IMR-90 (cell line): ENCODE measurements at regions of chr17 and their contacts with region 1.

Region 1: GRCh38 chr17:15257258-15257788 is 7.8 kb downstream of the PMP22 start:
- DNase-seq: peak; percentile 72
- ATAC-seq: peak; percentile 37
- H3K4me3 ChIP-seq: no peak overlapping the region
- H3K27ac ChIP-seq: no peak overlapping the region
- H3K4me1 ChIP-seq: peaks cover 13% of the 10 kb centered on the region
- H3K27me3 ChIP-seq: no peaks in the 10 kb centered on the region
- CTCF ChIP-seq: peak; percentile 84
- POLR2A ChIP-seq: no peak
- RAD21 ChIP-seq: peak; percentile 71

Region 2: GRCh38 chr17:15273141-15273793 is 15.9 kb after region 1 on chr17:
- CTCF ChIA-PET with region 1: no interaction called
- POLR2A ChIA-PET with region 1: no interaction called
- dilution Hi-C with region 1: no loop called
- in situ Hi-C with region 1: no loop called
- intact Hi-C with region 1: no loop called
- DNase-seq: peak; percentile 98
- ATAC-seq: peak; percentile 90
- H3K4me3 ChIP-seq: no peak overlapping the region
- H3K27ac ChIP-seq: peak overlapping the region; percentile 85
- H3K4me1 ChIP-seq: peaks cover 27% of the 10 kb centered on the region
- H3K27me3 ChIP-seq: peaks cover 16% of the 10 kb centered on the region
- CTCF ChIP-seq: no peak
- POLR2A ChIP-seq: no peak
- RAD21 ChIP-seq: peak; percentile 12; the same call in 1 of the 2 replicates

Region 3: GRCh38 chr17:15436473-15437302 is 179.4 kb after region 1 on chr17:
- CTCF ChIA-PET with region 1: no interaction called
- POLR2A ChIA-PET with region 1: no interaction called
- dilution Hi-C with region 1: no loop called
- in situ Hi-C with region 1: loop called (anchors 10 kb)
- intact Hi-C with region 1: loop called (anchors 1 kb)
- DNase-seq: peak; percentile 34
- ATAC-seq: no peak
- H3K4me3 ChIP-seq: no peak overlapping the region
- H3K27ac ChIP-seq: peak overlapping the region; percentile 6; the same call in 1 of the 2 replicates
- H3K4me1 ChIP-seq: peaks cover 23% of the 10 kb centered on the region
- H3K27me3 ChIP-seq: no peaks in the 10 kb centered on the region
- CTCF ChIP-seq: peak; percentile 30; the same call in 1 of the 2 replicates
- POLR2A ChIP-seq: no peak
- RAD21 ChIP-seq: no peak

Region 4: GRCh38 chr17:15502369-15503112 is 245.2 kb after region 1 on chr17:
- CTCF ChIA-PET with region 1: interaction called, 17 read pairs
- POLR2A ChIA-PET with region 1: interaction called, 4 read pairs
- dilution Hi-C with region 1: no loop called
- in situ Hi-C with region 1: loop called (anchors 5 kb)
- intact Hi-C with region 1: loop called (anchors 1 kb)
- DNase-seq: peak; percentile 93
- ATAC-seq: peak; percentile 99
- H3K4me3 ChIP-seq: no peak overlapping the region
- H3K27ac ChIP-seq: peak overlapping the region; percentile 47; the same call in 1 of the 2 replicates
- H3K4me1 ChIP-seq: peaks cover 7% of the 10 kb centered on the region; the same call in 1 of the 2 replicates
- H3K27me3 ChIP-seq: no peaks in the 10 kb centered on the region
- CTCF ChIP-seq: peak; percentile 97
- POLR2A ChIP-seq: peak; percentile 43; the same call in 1 of the 2 replicates
- RAD21 ChIP-seq: peak; percentile 97

Region 5: DNA sequence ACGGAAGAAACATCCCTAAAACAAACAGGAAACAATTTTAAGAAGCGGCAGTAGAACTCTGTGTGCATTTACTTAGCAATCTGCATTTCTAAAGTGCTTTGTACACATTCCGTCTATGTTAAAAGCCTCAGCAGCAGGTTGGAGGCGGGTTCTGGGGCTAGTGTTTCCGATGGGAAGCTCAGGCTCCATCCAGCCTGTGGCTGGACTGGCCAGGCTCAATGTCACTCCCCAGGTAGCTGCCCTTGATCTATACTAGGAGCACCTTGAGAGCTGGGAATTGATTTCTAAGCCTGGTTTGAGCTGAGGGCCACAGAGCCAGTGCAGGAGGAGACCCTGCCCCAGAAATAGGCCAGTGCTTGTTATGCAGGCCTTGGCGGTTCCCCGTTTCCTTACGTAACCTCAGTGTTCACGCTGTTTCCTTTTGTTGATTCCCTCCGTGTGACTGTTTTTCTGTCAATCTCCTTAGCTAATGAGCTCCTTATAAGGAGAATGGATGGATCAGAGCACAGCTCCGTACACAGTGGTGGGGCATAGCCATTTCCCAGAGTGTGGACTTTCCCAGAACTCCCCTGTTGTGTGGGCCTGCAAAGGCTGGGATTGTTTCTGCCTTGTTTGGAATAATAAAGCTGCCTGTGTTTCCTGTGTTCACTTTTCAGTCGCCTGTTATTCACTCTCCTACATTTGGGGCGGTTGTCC is 709.0 kb after region 1 on chr17:
- CTCF ChIA-PET with region 1: no interaction called
- POLR2A ChIA-PET with region 1: no interaction called
- dilution Hi-C with region 1: no loop called
- in situ Hi-C with region 1: loop called (anchors 25 kb)
- intact Hi-C with region 1: no loop called
- DNase-seq: peak; percentile 35
- ATAC-seq: peak; percentile 84
- H3K4me3 ChIP-seq: no peak overlapping the region
- H3K27ac ChIP-seq: peak overlapping the region; percentile 21
- H3K4me1 ChIP-seq: peaks cover 19% of the 10 kb centered on the region
- H3K27me3 ChIP-seq: no peaks in the 10 kb centered on the region
- CTCF ChIP-seq: no peak
- POLR2A ChIP-seq: no peak
- RAD21 ChIP-seq: no peak